Mammary epithelial cell (primary cell): ENCODE measurements at regions of chr3 and their contacts with region 1.

Region 1: GRCh38 chr3:23761440-23761896 is 44.3 kb upstream of the UBE2E1 start:
- DNase-seq: peak; percentile 44
- H3K4me3 ChIP-seq: no peak overlapping the region
- H3K27ac ChIP-seq: no peak overlapping the region
- H3K4me1 ChIP-seq: no peaks in the 10 kb centered on the region
- H3K27me3 ChIP-seq: no peaks in the 10 kb centered on the region
- CTCF ChIP-seq: peak; percentile 45 to 78

Region 2: GRCh38 chr3:23202921-23203707 is 558.4 kb before region 1 on chr3 and contains the start of gene UBE2E2:
- CTCF ChIA-PET with region 1: no interaction called
- dilution Hi-C with region 1: no loop called
- in situ Hi-C with region 1: loop called in 1 of 2 experiments (anchors 25 kb)
- intact Hi-C with region 1: loop called (anchors 5 kb)
- DNase-seq: peak; percentile 62
- H3K4me3 ChIP-seq: peak within 1 kb of the TSS; percentile 87 to 100 (median 96)
- H3K27ac ChIP-seq: peak within 1 kb of the TSS; percentile 81
- H3K4me1 ChIP-seq: peaks cover 12% of the 10 kb centered on the region
- H3K27me3 ChIP-seq: no peaks in the 10 kb centered on the region
- CTCF ChIP-seq: no peak
- total RNA-seq, gene UBE2E2: 37.3 to 47.9 TPM

Region 3: GRCh38 chr3:23444386-23444785 is 317.1 kb before region 1 on chr3:
- CTCF ChIA-PET with region 1: no interaction called
- dilution Hi-C with region 1: no loop called
- in situ Hi-C with region 1: no loop called
- intact Hi-C with region 1: loop called (anchors 1 kb)
- DNase-seq: no peak
- H3K4me3 ChIP-seq: no peak overlapping the region
- H3K27ac ChIP-seq: no peak overlapping the region
- H3K4me1 ChIP-seq: no peaks in the 10 kb centered on the region
- H3K27me3 ChIP-seq: no peaks in the 10 kb centered on the region
- CTCF ChIP-seq: no peak

Region 4: DNA sequence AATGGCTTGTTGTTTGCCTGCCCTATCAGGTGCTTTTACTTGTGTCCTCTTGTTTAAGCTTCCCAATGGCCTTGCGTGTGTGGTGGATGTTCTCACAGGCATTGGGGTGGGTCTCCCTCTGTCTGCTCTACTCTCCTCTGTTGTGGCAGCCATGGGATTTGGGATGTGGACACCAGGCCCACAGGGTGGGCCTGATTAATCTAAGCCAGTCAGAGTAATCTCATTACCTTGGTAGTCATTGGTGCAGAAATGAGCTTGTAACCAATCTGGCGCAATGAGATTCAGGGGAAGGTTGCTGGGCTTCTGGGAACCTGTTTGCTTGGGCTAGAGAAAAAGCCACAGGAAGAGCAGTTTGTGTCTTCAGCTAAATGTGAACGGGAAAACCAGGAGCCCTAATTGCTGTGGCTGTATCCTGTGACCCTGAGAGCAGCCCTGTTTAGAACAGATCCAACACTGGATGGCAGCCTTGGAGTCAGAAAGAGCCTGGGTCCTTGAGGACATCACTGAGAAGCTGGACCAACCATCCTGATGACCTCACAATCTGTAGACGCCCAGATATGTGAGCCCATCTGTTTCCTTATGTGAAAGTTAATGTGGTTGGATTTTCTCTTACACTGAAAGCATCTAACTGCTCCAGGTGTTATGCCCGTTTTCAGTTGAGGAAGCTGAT is 113.0 kb before region 1 on chr3:
- CTCF ChIA-PET with region 1: no interaction called
- dilution Hi-C with region 1: no loop called
- in situ Hi-C with region 1: no loop called
- intact Hi-C with region 1: loop called (anchors 1 kb)
- DNase-seq: no peak
- H3K4me3 ChIP-seq: no peak overlapping the region
- H3K27ac ChIP-seq: no peak overlapping the region
- H3K4me1 ChIP-seq: peaks cover 34% of the 10 kb centered on the region
- H3K27me3 ChIP-seq: no peaks in the 10 kb centered on the region
- CTCF ChIP-seq: peak in 1 of 2 donors; percentile 29